AG04450 (cell line): ENCODE measurements at regions of chr1 and their contacts with region 1.

Region 1: GRCh38 chr1:110338886-110339406 is at the start of gene RBM15:
- DNase-seq: peak; percentile 100
- H3K4me3 ChIP-seq: peak within 1 kb of the TSS; percentile 98
- H3K27ac ChIP-seq: peak within 1 kb of the TSS; percentile 99
- H3K27me3 ChIP-seq: no peaks in the 10 kb centered on the region
- CTCF ChIP-seq: no peak
- polyA plus RNA-seq, gene RBM15: 8.9 and 9.6 TPM in 2 replicates

Region 2: GRCh38 chr1:109341944-109342930 is 996.7 kb before region 1 on chr1:
- CTCF ChIA-PET with region 1: no interaction called
- POLR2A ChIA-PET with region 1: no interaction called
- DNase-seq: no peak
- H3K4me3 ChIP-seq: no peak overlapping the region
- H3K27ac ChIP-seq: no peak overlapping the region
- H3K27me3 ChIP-seq: no peaks in the 10 kb centered on the region
- CTCF ChIP-seq: no peak

Region 3: GRCh38 chr1:110380672-110381283 is 41.8 kb after region 1 on chr1:
- CTCF ChIA-PET with region 1: interaction called, 3 read pairs
- POLR2A ChIA-PET with region 1: interaction called, 13 read pairs
- DNase-seq: peak; percentile 70
- H3K4me3 ChIP-seq: no peak overlapping the region
- H3K27ac ChIP-seq: peak overlapping the region; percentile 66
- H3K27me3 ChIP-seq: no peaks in the 10 kb centered on the region
- CTCF ChIP-seq: no peak

Region 4: DNA sequence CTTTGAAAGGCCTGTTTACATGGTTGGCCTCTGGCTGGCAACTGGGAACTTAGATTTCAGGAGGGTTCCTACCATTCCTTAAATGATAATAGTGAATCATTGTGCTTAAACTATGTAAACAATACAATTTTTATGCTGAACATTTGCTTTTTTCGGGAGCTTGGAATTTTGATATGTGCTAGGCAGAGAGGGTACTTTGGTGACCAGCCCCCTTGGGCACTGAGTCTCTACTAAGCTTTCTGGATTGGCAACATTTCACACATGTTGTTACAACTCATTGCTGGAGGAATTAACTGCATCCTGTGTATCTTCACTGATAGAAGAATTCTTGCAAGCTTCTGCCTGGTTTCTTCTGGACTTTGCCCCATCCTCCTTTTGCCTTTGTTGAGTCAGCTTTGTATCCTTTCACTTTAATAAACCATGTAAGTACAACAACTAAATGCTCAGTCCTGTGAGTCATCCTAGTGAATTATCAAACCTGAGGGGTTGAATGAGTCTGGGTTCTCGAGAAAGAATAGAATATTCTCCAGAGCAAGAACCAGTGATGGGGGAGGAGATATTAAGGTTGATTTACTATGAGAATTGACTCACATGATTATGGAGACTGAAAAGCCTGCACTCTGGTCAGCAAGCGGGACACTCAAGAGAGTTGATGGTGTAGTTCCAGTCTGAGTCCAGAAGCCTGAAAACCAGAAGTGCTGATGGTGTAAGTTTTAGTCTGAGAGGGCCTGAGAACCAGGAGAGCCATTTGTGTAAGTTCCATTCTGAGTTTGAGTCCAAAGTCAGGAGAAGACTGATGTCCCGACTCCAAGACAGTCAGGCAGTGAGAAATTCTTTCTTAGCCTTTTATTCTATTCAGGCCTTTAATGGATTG is 55.0 kb after region 1 on chr1:
- CTCF ChIA-PET with region 1: interaction called, 12 read pairs
- POLR2A ChIA-PET with region 1: interaction called, 8 read pairs
- DNase-seq: peak; percentile 62
- H3K4me3 ChIP-seq: no peak overlapping the region
- H3K27ac ChIP-seq: peak overlapping the region; percentile 69
- H3K27me3 ChIP-seq: no peaks in the 10 kb centered on the region
- CTCF ChIP-seq: no peak

Region 5: GRCh38 chr1:110407260-110408210 is 68.6 kb after region 1 on chr1 and contains the start of gene LAMTOR5:
- CTCF ChIA-PET with region 1: interaction called, 32 read pairs
- POLR2A ChIA-PET with region 1: interaction called, 3 read pairs
- DNase-seq: peak; percentile 65
- H3K4me3 ChIP-seq: peak within 1 kb of the TSS; percentile 98
- H3K27ac ChIP-seq: peak within 1 kb of the TSS; percentile 93
- H3K27me3 ChIP-seq: no peaks in the 10 kb centered on the region
- CTCF ChIP-seq: no peak
- polyA plus RNA-seq, gene LAMTOR5: 288 and 300 TPM in 2 replicates